ENCODE measurements at regions of chr22 and their contacts with region 1.

Region 1: GRCh38 chr22:37544955-37545699 is 15.2 kb upstream of the CDC42EP1 start:
- DNase-seq: peak; percentile 88
- H3K4me3 ChIP-seq: peak overlapping the region in 2 of 4 donors; percentile 7 to 11
- H3K27ac ChIP-seq: peak overlapping the region; percentile 83 to 89 (median 88)
- H3K4me1 ChIP-seq: peaks cover 19 to 41% (median 26%) of the 10 kb centered on the region in 4 donors
- H3K27me3 ChIP-seq: no peaks in the 10 kb centered on the region
- CTCF ChIP-seq: peak; percentile 57 to 89 (median 74)
- EP300 ChIP-seq: no peak
- POLR2A ChIP-seq: no peak

Region 2: DNA sequence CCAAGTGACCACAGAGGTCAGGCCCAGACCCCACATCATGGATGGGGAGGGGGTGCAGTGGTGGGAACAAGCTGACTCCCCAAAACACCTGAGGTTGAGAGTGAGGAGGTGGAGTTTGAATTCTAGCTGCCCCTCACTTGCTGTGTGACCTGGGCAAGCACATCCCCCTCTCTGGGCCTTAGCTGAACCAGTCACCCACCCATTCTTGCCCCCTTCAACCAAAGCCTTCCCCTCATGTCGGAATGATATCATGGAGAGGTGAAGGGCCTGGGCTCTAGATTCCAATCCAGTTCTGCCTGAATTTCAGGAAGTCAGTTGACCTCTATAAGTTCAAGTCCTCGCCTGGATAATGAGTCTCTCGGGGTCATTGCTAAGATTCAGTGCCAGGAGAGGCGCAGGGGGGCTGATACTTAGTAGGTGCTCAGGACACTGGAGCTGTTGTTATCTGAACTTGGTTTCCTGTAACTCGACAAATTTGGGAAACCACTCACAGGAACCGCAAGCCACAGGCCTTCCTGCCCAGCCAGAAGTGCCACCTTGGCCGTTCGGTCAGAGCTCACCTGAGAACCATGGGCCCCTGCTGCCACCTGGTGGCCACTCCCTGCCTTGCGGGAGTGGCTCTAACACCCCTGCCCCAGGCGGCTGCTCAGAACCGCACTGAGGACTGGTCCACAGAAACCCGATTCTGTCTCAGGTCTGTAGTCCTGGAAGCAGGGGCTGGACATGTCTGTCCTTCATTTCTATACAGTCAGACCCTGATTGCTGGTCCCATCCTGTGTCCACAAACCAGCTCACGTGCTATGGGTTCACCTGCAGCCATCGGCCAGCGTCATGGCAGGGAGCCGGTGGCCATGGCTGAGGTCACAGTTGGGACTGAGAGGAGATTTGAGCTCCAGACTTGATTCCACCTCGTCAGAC is 22.0 kb after region 1 on chr22:
- in situ Hi-C with region 1: no loop called
- intact Hi-C with region 1: loop called (anchors 2 kb)
- DNase-seq: peak; percentile 95
- H3K4me3 ChIP-seq: no peak overlapping the region
- H3K27ac ChIP-seq: peak overlapping the region; percentile 51 to 99 (median 68)
- H3K4me1 ChIP-seq: peaks cover 58 to 83% (median 79%) of the 10 kb centered on the region in 4 donors
- H3K27me3 ChIP-seq: no peaks in the 10 kb centered on the region
- CTCF ChIP-seq: peak; percentile 95 to 97 (median 96)
- EP300 ChIP-seq: no peak
- POLR2A ChIP-seq: no peak

Measured in transverse colon (tissue), 4 donors.